ENCODE measurements at regions of chr14 and their contacts with region 1.

Region 1: GRCh38 chr14:63248211-63248610 is 44.0 kb downstream of the RHOJ start:
- DNase-seq: no peak
- H3K4me3 ChIP-seq: no peak overlapping the region
- H3K27ac ChIP-seq: peak overlapping the region; percentile 30 to 69 (median 58)
- H3K4me1 ChIP-seq: peaks cover 11 to 45% (median 39%) of the 10 kb centered on the region in 4 donors
- H3K27me3 ChIP-seq: no peaks in the 10 kb centered on the region
- CTCF ChIP-seq: no peak
- EP300 ChIP-seq: no peak
- POLR2A ChIP-seq: no peak

Region 2: GRCh38 chr14:63174760-63175211 is 73.4 kb before region 1 on chr14:
- intact Hi-C with region 1: no loop called
- DNase-seq: no peak
- H3K4me3 ChIP-seq: no peak overlapping the region
- H3K27ac ChIP-seq: no peak overlapping the region
- H3K4me1 ChIP-seq: peaks cover 9 to 23% (median 17%) of the 10 kb centered on the region in 4 donors
- H3K27me3 ChIP-seq: no peaks in the 10 kb centered on the region
- CTCF ChIP-seq: peak; percentile 67 to 73 (median 70)
- EP300 ChIP-seq: no peak
- POLR2A ChIP-seq: no peak

Region 3: GRCh38 chr14:63204407-63205043 is 43.7 kb before region 1 on chr14 and contains the start of gene RHOJ:
- intact Hi-C with region 1: loop called (anchors 5 kb)
- DNase-seq: no peak
- H3K4me3 ChIP-seq: peak within 1 kb of the TSS; percentile 57 to 69 (median 62)
- H3K27ac ChIP-seq: peak within 1 kb of the TSS; percentile 85 to 91 (median 88)
- H3K4me1 ChIP-seq: peaks cover 0 to 30% (median 29%) of the 10 kb centered on the region in 4 donors
- H3K27me3 ChIP-seq: no peaks in the 10 kb centered on the region
- CTCF ChIP-seq: no peak
- EP300 ChIP-seq: no peak
- POLR2A ChIP-seq: no peak
- total RNA-seq, gene RHOJ: 10.4 to 13.1 (median 11.6) TPM

Measured in esophagus muscularis mucosa (tissue), 4 donors.